Stomach (tissue), 19 donors: ENCODE measurements at regions of chr6 and their contacts with region 1.

Region 1: DNA sequence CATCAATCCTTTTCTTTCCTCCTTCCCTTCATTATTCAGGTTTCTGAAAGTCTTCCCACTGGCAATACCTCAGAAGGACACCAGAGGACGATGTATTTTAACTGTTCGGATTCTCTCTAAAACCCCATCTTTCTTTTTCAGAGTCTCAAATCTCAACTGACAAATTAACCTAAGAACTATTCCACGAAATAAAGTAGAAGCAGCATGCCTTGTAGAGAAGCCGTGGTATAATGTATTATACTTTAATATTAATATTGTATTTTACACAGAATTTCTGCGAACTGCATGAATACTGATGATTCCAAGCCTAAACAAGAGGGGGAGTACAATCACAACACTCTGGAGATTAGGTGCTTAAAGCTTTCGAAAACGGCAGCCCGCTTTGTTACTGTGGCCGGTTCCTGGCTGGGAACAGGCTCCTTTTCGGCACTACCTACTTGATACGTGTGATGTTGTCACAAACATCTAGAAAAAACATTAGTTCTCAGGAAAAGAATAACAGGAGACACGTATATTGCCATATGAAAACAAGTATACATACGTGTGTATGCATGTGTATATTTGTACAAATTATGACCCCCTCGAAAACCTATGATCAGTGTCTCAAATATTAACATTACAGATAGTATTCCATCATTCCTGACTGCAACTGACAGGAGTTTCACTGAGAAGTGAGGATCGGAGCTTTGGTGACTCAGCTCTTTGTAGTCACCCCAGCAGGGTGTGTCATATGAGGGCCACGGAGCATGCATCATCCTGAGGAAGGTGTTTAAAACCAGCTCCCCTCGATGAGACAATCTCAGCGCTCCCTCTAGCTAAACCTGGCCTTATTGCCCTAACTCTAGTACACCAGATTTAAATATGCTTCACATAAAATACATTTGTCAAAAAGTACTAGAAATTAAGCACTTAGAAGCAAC is 319.7 kb upstream of the TCF21 start:
- DNase-seq: peak in 1 of 2 donors; percentile 76
- H3K4me3 ChIP-seq: peak overlapping the region; percentile 28 to 37 (median 34)
- H3K27ac ChIP-seq: peak overlapping the region in 4 of 5 donors; percentile 23 to 70 (median 60)
- H3K4me1 ChIP-seq: peaks cover 0 to 13% (median 8%) of the 10 kb centered on the region in 4 donors
- H3K27me3 ChIP-seq: peaks cover 0 to 16% (median 7%) of the 10 kb centered on the region in 3 donors
- CTCF ChIP-seq: peak in 5 of 7 experiments; percentile 76 to 89 (median 86)
- EP300 ChIP-seq: no peak
- POLR2A ChIP-seq: no peak

Region 2: GRCh38 chr6:133916650-133917151 is 347.5 kb after region 1 on chr6:
- intact Hi-C with region 1: loop called (anchors 5 kb)
- DNase-seq: peak; percentile 89 to 93
- H3K4me3 ChIP-seq: no peak overlapping the region
- H3K27ac ChIP-seq: peak overlapping the region in 2 of 5 donors; percentile 16 to 17
- H3K4me1 ChIP-seq: peaks cover 0 to 13% (median 0%) of the 10 kb centered on the region in 4 donors
- H3K27me3 ChIP-seq: no peaks in the 10 kb centered on the region
- CTCF ChIP-seq: peak in 5 of 7 experiments; percentile 63 to 79 (median 74)
- EP300 ChIP-seq: no peak
- POLR2A ChIP-seq: no peak